ENCODE measurements at regions of chr20 and their contacts with region 1.

Region 1: DNA sequence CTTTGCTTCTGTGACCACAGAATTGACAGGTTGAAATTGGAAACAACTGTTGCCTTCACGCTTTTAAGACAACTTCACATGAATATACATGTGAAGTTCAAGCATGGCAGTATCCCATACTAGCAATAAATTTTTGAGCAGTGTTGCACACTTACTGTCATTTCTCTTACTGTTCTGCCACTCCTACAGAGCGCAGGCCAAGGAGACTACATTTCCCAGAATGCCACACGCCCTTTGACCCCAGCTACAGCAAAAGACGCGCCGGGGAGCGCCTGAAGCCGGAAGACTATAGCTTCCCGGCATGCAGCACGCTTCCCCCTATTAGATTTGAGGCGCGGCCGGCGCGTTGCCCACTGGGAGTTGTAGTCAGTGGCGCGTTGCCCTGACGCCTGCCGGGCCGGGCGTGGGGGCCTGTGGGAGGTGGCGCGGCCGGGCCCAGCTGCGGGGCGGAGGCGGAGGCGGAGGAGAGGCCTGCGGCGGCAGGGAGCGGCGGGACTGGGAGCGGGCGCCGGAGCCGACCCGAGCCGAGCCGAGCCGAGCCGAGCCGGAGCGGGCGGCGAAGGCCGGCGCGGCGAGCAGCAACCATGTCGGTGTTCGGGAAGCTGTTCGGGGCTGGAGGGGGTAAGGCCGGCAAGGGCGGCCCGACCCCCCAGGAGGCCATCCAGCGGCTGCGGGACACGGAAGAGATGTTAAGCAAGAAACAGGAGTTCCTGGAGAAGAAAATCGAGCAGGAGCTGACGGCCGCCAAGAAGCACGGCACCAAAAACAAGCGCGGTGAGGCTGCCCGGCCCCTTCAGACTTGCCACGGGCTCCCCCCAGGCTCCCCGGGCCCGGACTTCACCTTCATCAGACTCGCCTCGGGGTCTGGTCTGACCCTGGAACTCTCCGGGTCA is at the start of gene CHMP4B:
- DNase-seq: peak; percentile 98
- ATAC-seq: peak; percentile 96
- H3K4me3 ChIP-seq: peak within 1 kb of the TSS; percentile 86 to 97 (median 92)
- H3K4me3 Mint-ChIP-seq: peak within 1 kb of the TSS; percentile 97
- H3K27ac ChIP-seq: peak within 1 kb of the TSS; percentile 65 to 90
- H3K27ac Mint-ChIP-seq: peak within 1 kb of the TSS; percentile 96
- H3K4me1 ChIP-seq: peaks cover 23 to 30% of the 10 kb centered on the region in 2 donors
- H3K4me1 Mint-ChIP-seq: peaks cover 45% of the 10 kb centered on the region
- H3K27me3 ChIP-seq: no peaks in the 10 kb centered on the region
- H3K27me3 Mint-ChIP-seq: peaks cover 4% of the 10 kb centered on the region
- CTCF ChIP-seq: no peak
- total RNA-seq, gene CHMP4B: 81.6 and 83.9 TPM in 2 replicates

Region 2: GRCh38 chr20:32109392-32110172 is 1701.5 kb before region 1 on chr20 and contains the start of gene TM9SF4:
- CTCF ChIA-PET with region 1: no interaction called
- POLR2A ChIA-PET with region 1: no interaction called
- intact Hi-C with region 1: loop called (anchors 5 kb)
- DNase-seq: peak; percentile 97
- ATAC-seq: peak; percentile 90
- H3K4me3 ChIP-seq: peak within 1 kb of the TSS; percentile 87 to 96 (median 95)
- H3K4me3 Mint-ChIP-seq: peak within 1 kb of the TSS; percentile 99
- H3K27ac ChIP-seq: peak within 1 kb of the TSS; percentile 99
- H3K27ac Mint-ChIP-seq: peak within 1 kb of the TSS; percentile 99
- H3K4me1 ChIP-seq: peaks cover 8 to 9% of the 10 kb centered on the region in 2 donors
- H3K4me1 Mint-ChIP-seq: peaks cover 36% of the 10 kb centered on the region
- H3K27me3 ChIP-seq: no peaks in the 10 kb centered on the region
- H3K27me3 Mint-ChIP-seq: no peaks in the 10 kb centered on the region
- CTCF ChIP-seq: no peak
- total RNA-seq, gene TM9SF4: 50.4 and 53.8 TPM in 2 replicates

Region 3: DNA sequence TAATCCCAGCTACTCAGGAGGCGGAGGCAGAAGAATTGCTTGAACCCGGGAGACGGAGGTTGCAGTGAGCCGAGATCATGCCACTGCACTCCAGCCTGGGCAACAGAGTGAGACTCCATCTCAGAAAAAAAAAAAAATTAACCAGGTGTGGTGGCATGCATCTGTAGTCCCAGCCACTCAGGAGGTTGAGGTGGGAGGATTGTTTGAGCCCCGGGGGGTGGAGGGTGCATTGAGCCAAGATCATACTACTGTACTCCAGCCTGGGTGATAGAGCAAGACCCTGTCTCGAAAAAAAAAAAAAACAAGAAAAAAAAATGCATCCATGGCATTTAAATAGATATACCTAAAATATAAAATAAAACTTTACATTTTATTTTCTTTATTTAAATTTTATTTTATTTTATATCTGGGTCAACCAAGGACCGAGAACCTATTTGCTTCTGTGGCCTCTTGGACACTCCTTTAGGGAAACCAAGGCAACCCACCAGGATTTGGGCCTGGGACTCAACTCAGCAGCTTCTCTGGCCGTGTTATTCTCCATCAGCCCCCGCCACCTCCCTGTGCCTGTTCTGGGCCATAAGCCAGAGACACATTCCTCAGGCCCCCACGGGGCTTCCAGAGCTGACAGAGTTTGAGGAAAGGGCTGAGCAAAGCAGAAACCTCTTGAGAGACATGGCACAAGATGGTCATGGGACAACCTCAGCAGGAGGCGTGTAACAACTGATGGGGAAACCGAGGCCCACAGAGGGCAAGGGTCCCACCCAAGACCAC is 373.8 kb before region 1 on chr20:
- CTCF ChIA-PET with region 1: no interaction called
- POLR2A ChIA-PET with region 1: no interaction called
- intact Hi-C with region 1: no loop called
- DNase-seq: no peak
- ATAC-seq: no peak
- H3K4me3 ChIP-seq: no peak overlapping the region
- H3K4me3 Mint-ChIP-seq: no peak overlapping the region
- H3K27ac ChIP-seq: no peak overlapping the region
- H3K27ac Mint-ChIP-seq: no peak overlapping the region
- H3K4me1 ChIP-seq: peaks cover 0 to 7% of the 10 kb centered on the region in 2 donors
- H3K4me1 Mint-ChIP-seq: peaks cover 10% of the 10 kb centered on the region
- H3K27me3 ChIP-seq: no peaks in the 10 kb centered on the region
- H3K27me3 Mint-ChIP-seq: no peaks in the 10 kb centered on the region
- CTCF ChIP-seq: no peak

Region 4: GRCh38 chr20:33686100-33686983 is 124.8 kb before region 1 on chr20 and contains the start of gene E2F1:
- CTCF ChIA-PET with region 1: no interaction called
- POLR2A ChIA-PET with region 1: no interaction called
- intact Hi-C with region 1: loop called (anchors 1 kb)
- DNase-seq: peak; percentile 95
- ATAC-seq: peak; percentile 96
- H3K4me3 ChIP-seq: peak within 1 kb of the TSS; percentile 28 to 56 (median 47)
- H3K4me3 Mint-ChIP-seq: peak within 1 kb of the TSS; percentile 92
- H3K27ac ChIP-seq: peak within 1 kb of the TSS; percentile 50 to 65
- H3K27ac Mint-ChIP-seq: peak within 1 kb of the TSS; percentile 89
- H3K4me1 ChIP-seq: peaks cover 16 to 22% of the 10 kb centered on the region in 2 donors
- H3K4me1 Mint-ChIP-seq: peaks cover 27% of the 10 kb centered on the region
- H3K27me3 ChIP-seq: no peaks in the 10 kb centered on the region
- H3K27me3 Mint-ChIP-seq: no peaks in the 10 kb centered on the region
- CTCF ChIP-seq: peak; percentile 33
- total RNA-seq, gene E2F1: 2.4 and 2.7 TPM in 2 replicates

Region 5: DNA sequence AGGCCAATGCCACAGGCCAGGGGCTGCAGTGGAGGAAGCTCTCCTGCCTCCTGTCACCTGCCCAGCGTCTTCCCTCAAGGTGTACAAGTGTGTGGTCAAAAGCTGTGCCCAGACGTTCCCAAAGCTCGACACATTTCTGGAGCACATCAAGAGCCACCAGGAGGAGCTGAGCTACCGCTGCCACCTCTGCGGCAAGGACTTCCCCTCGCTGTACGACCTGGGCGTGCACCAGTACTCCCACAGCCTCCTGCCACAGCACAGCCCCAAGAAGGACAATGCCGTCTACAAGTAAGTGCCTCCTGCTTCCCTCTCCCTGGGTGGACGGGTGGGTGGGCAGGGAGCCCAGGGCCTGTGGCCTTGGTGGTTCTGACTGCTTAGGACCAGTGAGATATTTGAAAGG is 41.1 kb before region 1 on chr20:
- CTCF ChIA-PET with region 1: interaction called, 10 read pairs
- POLR2A ChIA-PET with region 1: interaction called, 7 read pairs
- intact Hi-C with region 1: no loop called
- DNase-seq: peak; percentile 42
- ATAC-seq: peak; percentile 41
- H3K4me3 ChIP-seq: peak overlapping the region in 1 of 5 experiments; percentile 15
- H3K4me3 Mint-ChIP-seq: peak overlapping the region; percentile 61
- H3K27ac ChIP-seq: no peak overlapping the region
- H3K27ac Mint-ChIP-seq: peak overlapping the region; percentile 70
- H3K4me1 ChIP-seq: peaks cover 21 to 27% of the 10 kb centered on the region in 2 donors
- H3K4me1 Mint-ChIP-seq: peaks cover 31% of the 10 kb centered on the region
- H3K27me3 ChIP-seq: no peaks in the 10 kb centered on the region
- H3K27me3 Mint-ChIP-seq: no peaks in the 10 kb centered on the region
- CTCF ChIP-seq: no peak

Region 6: GRCh38 chr20:33992923-33993575 is 181.9 kb after region 1 on chr20:
- CTCF ChIA-PET with region 1: interaction called, 4 read pairs
- POLR2A ChIA-PET with region 1: interaction called, 5 read pairs
- intact Hi-C with region 1: loop called (anchors 1 kb)
- DNase-seq: peak; percentile 99
- ATAC-seq: peak; percentile 84
- H3K4me3 ChIP-seq: peak overlapping the region; percentile 94 to 99 (median 98)
- H3K4me3 Mint-ChIP-seq: peak overlapping the region; percentile 92
- H3K27ac ChIP-seq: peak overlapping the region; percentile 90 to 91
- H3K27ac Mint-ChIP-seq: peak overlapping the region; percentile 99
- H3K4me1 ChIP-seq: peaks cover 40 to 48% of the 10 kb centered on the region in 2 donors
- H3K4me1 Mint-ChIP-seq: peaks cover 59% of the 10 kb centered on the region
- H3K27me3 ChIP-seq: no peaks in the 10 kb centered on the region
- H3K27me3 Mint-ChIP-seq: no peaks in the 10 kb centered on the region
- CTCF ChIP-seq: no peak

Region 7: GRCh38 chr20:34089655-34090345 is 278.7 kb after region 1 on chr20:
- CTCF ChIA-PET with region 1: no interaction called
- POLR2A ChIA-PET with region 1: no interaction called
- intact Hi-C with region 1: no loop called
- DNase-seq: no peak
- ATAC-seq: no peak
- H3K4me3 ChIP-seq: no peak overlapping the region
- H3K4me3 Mint-ChIP-seq: no peak overlapping the region
- H3K27ac ChIP-seq: no peak overlapping the region
- H3K27ac Mint-ChIP-seq: no peak overlapping the region
- H3K4me1 ChIP-seq: no peaks in the 10 kb centered on the region
- H3K4me1 Mint-ChIP-seq: no peaks in the 10 kb centered on the region
- H3K27me3 ChIP-seq: no peaks in the 10 kb centered on the region
- H3K27me3 Mint-ChIP-seq: no peaks in the 10 kb centered on the region
- CTCF ChIP-seq: no peak

Region 8: GRCh38 chr20:35410613-35411012 is 1599.5 kb after region 1 on chr20:
- CTCF ChIA-PET with region 1: no interaction called
- POLR2A ChIA-PET with region 1: no interaction called
- intact Hi-C with region 1: loop called (anchors 10 kb)
- DNase-seq: no peak
- ATAC-seq: no peak
- H3K4me3 ChIP-seq: no peak overlapping the region
- H3K4me3 Mint-ChIP-seq: peak overlapping the region; percentile 99
- H3K27ac ChIP-seq: no peak overlapping the region
- H3K27ac Mint-ChIP-seq: peak overlapping the region; percentile 99
- H3K4me1 ChIP-seq: peaks cover 9 to 15% of the 10 kb centered on the region in 2 donors
- H3K4me1 Mint-ChIP-seq: peaks cover 24% of the 10 kb centered on the region
- H3K27me3 ChIP-seq: no peaks in the 10 kb centered on the region
- H3K27me3 Mint-ChIP-seq: peaks cover 4% of the 10 kb centered on the region
- CTCF ChIP-seq: no peak